ENCODE measurements at regions of chr2 and their contacts with region 1.

Region 1: DNA sequence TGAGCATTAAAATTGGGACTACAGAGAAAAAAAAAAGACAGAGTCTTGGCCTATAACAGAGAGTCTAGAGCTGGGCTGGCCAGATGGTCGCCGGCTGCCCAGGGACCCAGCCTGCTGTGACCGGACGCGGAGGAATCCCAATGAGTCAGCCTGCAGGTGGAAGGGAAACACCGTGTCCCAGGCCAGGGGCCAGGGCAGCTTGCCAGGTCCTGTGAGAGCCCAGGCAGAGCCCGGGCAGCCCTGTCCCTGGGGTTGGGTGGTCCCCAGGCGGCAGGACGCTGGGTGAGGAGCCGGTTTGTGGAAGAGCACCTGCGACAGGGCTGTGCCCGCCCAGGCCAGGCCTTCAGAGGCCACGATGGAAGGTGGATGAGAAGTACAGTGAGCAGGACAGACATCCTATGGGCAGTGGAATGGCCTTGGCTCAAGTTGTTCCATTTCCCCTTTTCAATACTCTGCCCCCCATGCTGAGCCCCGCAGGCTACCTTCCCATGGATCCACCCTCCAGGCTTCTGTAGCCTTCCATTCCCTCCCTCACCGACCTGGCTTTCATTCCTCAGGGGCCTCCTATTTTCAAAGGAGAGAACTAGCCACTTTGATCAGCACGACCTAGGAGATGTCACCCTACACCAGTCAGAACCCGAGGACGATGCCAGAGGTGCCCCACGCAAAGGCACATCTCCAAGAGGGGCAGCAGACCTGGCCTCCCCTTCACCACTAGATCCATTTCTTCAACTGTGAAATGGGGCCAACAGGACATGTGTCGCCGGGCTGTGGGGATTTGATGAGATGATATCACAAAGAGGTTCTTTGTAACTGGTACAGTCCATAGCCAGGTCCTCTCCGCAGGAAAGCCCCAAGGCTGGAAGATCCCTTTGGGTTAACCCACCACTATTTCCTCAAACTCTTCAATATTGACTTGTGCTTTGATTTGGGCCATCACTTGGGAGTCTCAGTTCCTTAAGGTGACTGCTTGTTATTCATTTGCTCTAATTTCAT is 87.5 kb downstream of the POLR1A start:
- DNase-seq: peak; percentile 64
- ATAC-seq: peak; percentile 21

Region 2: GRCh38 chr2:85819811-85820510 is 198.2 kb before region 1 on chr2:
- intact Hi-C with region 1: loop called (anchors 1 kb)
- DNase-seq: no peak
- ATAC-seq: no peak

Region 3: GRCh38 chr2:85911814-85912692 is 106.1 kb before region 1 on chr2:
- intact Hi-C with region 1: loop called (anchors 10 kb)
- DNase-seq: no peak
- ATAC-seq: peak; percentile 4